ENCODE measurements at regions of chr2 and their contacts with region 1.

Region 1: GRCh38 chr2:216698895-216699294 is 3.5 kb upstream of the IGFBP5 start:
- DNase-seq: peak in 2 of 5 donors; percentile 33 to 50
- H3K4me3 ChIP-seq: no peak overlapping the region
- H3K27ac ChIP-seq: peak overlapping the region in 1 of 2 donors; percentile 73
- H3K4me1 ChIP-seq: peaks cover 23% of the 10 kb centered on the region
- H3K27me3 ChIP-seq: no peaks in the 10 kb centered on the region
- CTCF ChIP-seq: peak; percentile 49 to 88 (median 79)
- EP300 ChIP-seq: no peak
- POLR2A ChIP-seq: no peak

Region 2: GRCh38 chr2:214881647-214882202 is 1817.2 kb before region 1 on chr2:
- intact Hi-C with region 1: no loop called
- DNase-seq: no peak
- H3K4me3 ChIP-seq: no peak overlapping the region
- H3K27ac ChIP-seq: no peak overlapping the region
- H3K4me1 ChIP-seq: no peaks in the 10 kb centered on the region
- H3K27me3 ChIP-seq: no peaks in the 10 kb centered on the region
- CTCF ChIP-seq: no peak
- EP300 ChIP-seq: no peak
- POLR2A ChIP-seq: no peak

Region 3: GRCh38 chr2:216151313-216152030 is 547.4 kb before region 1 on chr2:
- intact Hi-C with region 1: no loop called
- DNase-seq: no peak
- H3K4me3 ChIP-seq: no peak overlapping the region
- H3K27ac ChIP-seq: no peak overlapping the region
- H3K4me1 ChIP-seq: no peaks in the 10 kb centered on the region
- H3K27me3 ChIP-seq: no peaks in the 10 kb centered on the region
- CTCF ChIP-seq: no peak
- EP300 ChIP-seq: no peak
- POLR2A ChIP-seq: no peak

Region 4: GRCh38 chr2:216936954-216937357 is 238.1 kb after region 1 on chr2:
- intact Hi-C with region 1: loop called in 1 of 4 experiments (anchors 10 kb)
- DNase-seq: peak in 1 of 5 donors; percentile 21
- H3K4me3 ChIP-seq: no peak overlapping the region
- H3K27ac ChIP-seq: peak overlapping the region in 1 of 2 donors; percentile 26
- H3K4me1 ChIP-seq: peaks cover 18% of the 10 kb centered on the region
- H3K27me3 ChIP-seq: no peaks in the 10 kb centered on the region
- CTCF ChIP-seq: no peak
- EP300 ChIP-seq: no peak
- POLR2A ChIP-seq: no peak

Region 5: GRCh38 chr2:217166241-217166850 is 467.5 kb after region 1 on chr2:
- intact Hi-C with region 1: loop called in 2 of 4 experiments (anchors 5 kb)
- DNase-seq: no peak
- H3K4me3 ChIP-seq: no peak overlapping the region
- H3K27ac ChIP-seq: no peak overlapping the region
- H3K4me1 ChIP-seq: peaks cover 5% of the 10 kb centered on the region
- H3K27me3 ChIP-seq: no peaks in the 10 kb centered on the region
- CTCF ChIP-seq: peak in 1 of 3 donors; percentile 43
- EP300 ChIP-seq: no peak
- POLR2A ChIP-seq: no peak

Region 6: GRCh38 chr2:217250013-217250524 is 551.2 kb after region 1 on chr2:
- intact Hi-C with region 1: loop called in 2 of 4 experiments (anchors 5 to 10 kb)
- DNase-seq: peak; percentile 41 to 83 (median 78)
- H3K4me3 ChIP-seq: no peak overlapping the region
- H3K27ac ChIP-seq: peak overlapping the region; percentile 53 to 81
- H3K4me1 ChIP-seq: peaks cover 17% of the 10 kb centered on the region
- H3K27me3 ChIP-seq: no peaks in the 10 kb centered on the region
- CTCF ChIP-seq: no peak
- EP300 ChIP-seq: peak; percentile 95
- POLR2A ChIP-seq: no peak

Region 7: GRCh38 chr2:217387911-217388417 is 689.1 kb after region 1 on chr2:
- intact Hi-C with region 1: loop called in 2 of 4 experiments (anchors 5 to 10 kb)
- DNase-seq: no peak
- H3K4me3 ChIP-seq: no peak overlapping the region
- H3K27ac ChIP-seq: no peak overlapping the region
- H3K4me1 ChIP-seq: peaks cover 13% of the 10 kb centered on the region
- H3K27me3 ChIP-seq: no peaks in the 10 kb centered on the region
- CTCF ChIP-seq: no peak
- EP300 ChIP-seq: no peak
- POLR2A ChIP-seq: no peak

Region 8: GRCh38 chr2:217510771-217511291 is 811.9 kb after region 1 on chr2:
- intact Hi-C with region 1: loop called (anchors 5 kb)
- DNase-seq: peak; percentile 61 to 79 (median 69)
- H3K4me3 ChIP-seq: no peak overlapping the region
- H3K27ac ChIP-seq: no peak overlapping the region
- H3K4me1 ChIP-seq: peaks cover 3% of the 10 kb centered on the region
- H3K27me3 ChIP-seq: no peaks in the 10 kb centered on the region
- CTCF ChIP-seq: peak; percentile 30 to 90 (median 79)
- EP300 ChIP-seq: no peak
- POLR2A ChIP-seq: peak; percentile 30

Measured in ovary (tissue), 10 donors.